ENCODE measurements at regions of chr6 and their contacts with region 1.

Region 1: GRCh38 chr6:44265007-44265721 is at the start of gene NFKBIE:
- DNase-seq: peak; percentile 97
- ATAC-seq: peak; percentile 52
- H3K4me3 Mint-ChIP-seq: peak within 1 kb of the TSS; percentile 88
- H3K27ac Mint-ChIP-seq: peak within 1 kb of the TSS; percentile 93
- H3K4me1 Mint-ChIP-seq: peaks cover 58% of the 10 kb centered on the region
- H3K27me3 Mint-ChIP-seq: peaks cover 14% of the 10 kb centered on the region
- total RNA-seq, gene NFKBIE: 17.2 to 19.9 TPM

Region 2: GRCh38 chr6:44172731-44173500 is 92.2 kb before region 1 on chr6:
- CTCF ChIA-PET with region 1: interaction called, 6 read pairs
- POLR2A ChIA-PET with region 1: no interaction called
- intact Hi-C with region 1: loop called (anchors 1 to 2 kb)
- DNase-seq: peak; percentile 91
- ATAC-seq: peak; percentile 72
- H3K4me3 Mint-ChIP-seq: peak overlapping the region; percentile 73
- H3K27ac Mint-ChIP-seq: peak overlapping the region; percentile 95
- H3K4me1 Mint-ChIP-seq: peaks cover 30% of the 10 kb centered on the region
- H3K27me3 Mint-ChIP-seq: no peaks in the 10 kb centered on the region

Region 3: DNA sequence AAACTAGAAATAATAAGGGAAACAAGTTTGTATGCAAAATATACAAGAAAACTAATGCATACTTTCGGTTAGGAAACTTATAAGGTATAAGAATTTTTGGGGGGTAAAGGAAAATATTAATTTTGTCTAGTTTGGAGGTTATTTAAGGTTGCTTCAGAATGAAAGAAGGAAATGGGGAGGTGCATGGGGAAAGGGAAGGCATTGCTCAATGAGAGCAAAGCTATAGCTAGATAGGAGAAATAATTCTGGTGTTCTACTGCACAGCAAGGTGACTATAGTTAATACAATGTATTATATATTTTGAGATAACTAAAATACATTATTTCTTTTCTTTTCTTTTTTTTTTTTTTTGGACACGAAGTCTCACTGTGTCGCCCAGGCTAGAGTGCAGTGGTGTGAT is 53.9 kb before region 1 on chr6:
- CTCF ChIA-PET with region 1: no interaction called
- POLR2A ChIA-PET with region 1: no interaction called
- intact Hi-C with region 1: no loop called
- DNase-seq: no peak
- ATAC-seq: no peak
- H3K4me3 Mint-ChIP-seq: no peak overlapping the region
- H3K27ac Mint-ChIP-seq: no peak overlapping the region
- H3K4me1 Mint-ChIP-seq: no peaks in the 10 kb centered on the region
- H3K27me3 Mint-ChIP-seq: no peaks in the 10 kb centered on the region

Region 4: DNA sequence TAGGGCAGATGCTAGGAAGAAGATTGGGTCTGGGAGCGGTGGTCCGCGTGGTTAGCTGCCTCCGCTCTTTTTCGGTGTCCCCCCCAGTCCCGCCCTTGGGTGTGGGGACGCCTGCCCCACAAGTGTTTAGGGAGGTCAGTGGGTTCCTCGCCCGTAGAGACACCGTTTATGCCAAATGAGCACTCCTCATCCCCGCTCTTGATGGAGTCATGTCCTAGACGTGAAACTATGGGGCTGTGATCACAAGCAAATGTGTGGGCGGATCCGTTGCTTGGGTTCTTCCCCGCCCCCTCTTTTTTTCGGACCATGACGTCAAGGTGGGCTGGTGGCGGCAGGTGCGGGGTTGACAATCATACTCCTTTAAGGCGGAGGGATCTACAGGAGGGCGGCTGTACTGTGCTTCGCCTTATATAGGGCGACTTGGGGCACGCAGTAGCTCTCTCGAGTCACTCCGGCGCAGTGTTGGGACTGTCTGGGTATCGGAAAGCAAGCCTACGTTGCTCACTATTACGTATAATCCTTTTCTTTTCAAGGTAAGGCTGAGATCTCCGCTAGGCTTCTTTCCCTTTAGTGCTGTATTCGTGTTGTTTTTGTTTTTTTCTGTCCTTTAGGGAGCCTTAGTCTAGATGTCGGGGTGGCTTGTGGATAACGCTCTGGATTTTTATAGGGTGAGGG is 18.4 kb before region 1 on chr6 and contains the start of gene HSP90AB1:
- CTCF ChIA-PET with region 1: interaction called, 6 read pairs
- POLR2A ChIA-PET with region 1: interaction called, 12 read pairs
- intact Hi-C with region 1: loop called (anchors 1 kb)
- DNase-seq: peak; percentile 98
- ATAC-seq: peak; percentile 86
- H3K4me3 Mint-ChIP-seq: peak within 1 kb of the TSS; percentile 97
- H3K27ac Mint-ChIP-seq: peak within 1 kb of the TSS; percentile 99
- H3K4me1 Mint-ChIP-seq: peaks cover 44% of the 10 kb centered on the region
- H3K27me3 Mint-ChIP-seq: no peaks in the 10 kb centered on the region
- total RNA-seq, gene HSP90AB1: 2,120 to 2,263 TPM

Region 5: GRCh38 chr6:44304282-44305199 is 39.4 kb after region 1 on chr6:
- CTCF ChIA-PET with region 1: interaction called, 55 read pairs
- POLR2A ChIA-PET with region 1: interaction called, 3 read pairs
- intact Hi-C with region 1: loop called (anchors 1 to 2 kb)
- DNase-seq: peak; percentile 60
- ATAC-seq: peak; percentile 71
- H3K4me3 Mint-ChIP-seq: no peak overlapping the region
- H3K27ac Mint-ChIP-seq: no peak overlapping the region
- H3K4me1 Mint-ChIP-seq: no peaks in the 10 kb centered on the region
- H3K27me3 Mint-ChIP-seq: no peaks in the 10 kb centered on the region

Region 6: DNA sequence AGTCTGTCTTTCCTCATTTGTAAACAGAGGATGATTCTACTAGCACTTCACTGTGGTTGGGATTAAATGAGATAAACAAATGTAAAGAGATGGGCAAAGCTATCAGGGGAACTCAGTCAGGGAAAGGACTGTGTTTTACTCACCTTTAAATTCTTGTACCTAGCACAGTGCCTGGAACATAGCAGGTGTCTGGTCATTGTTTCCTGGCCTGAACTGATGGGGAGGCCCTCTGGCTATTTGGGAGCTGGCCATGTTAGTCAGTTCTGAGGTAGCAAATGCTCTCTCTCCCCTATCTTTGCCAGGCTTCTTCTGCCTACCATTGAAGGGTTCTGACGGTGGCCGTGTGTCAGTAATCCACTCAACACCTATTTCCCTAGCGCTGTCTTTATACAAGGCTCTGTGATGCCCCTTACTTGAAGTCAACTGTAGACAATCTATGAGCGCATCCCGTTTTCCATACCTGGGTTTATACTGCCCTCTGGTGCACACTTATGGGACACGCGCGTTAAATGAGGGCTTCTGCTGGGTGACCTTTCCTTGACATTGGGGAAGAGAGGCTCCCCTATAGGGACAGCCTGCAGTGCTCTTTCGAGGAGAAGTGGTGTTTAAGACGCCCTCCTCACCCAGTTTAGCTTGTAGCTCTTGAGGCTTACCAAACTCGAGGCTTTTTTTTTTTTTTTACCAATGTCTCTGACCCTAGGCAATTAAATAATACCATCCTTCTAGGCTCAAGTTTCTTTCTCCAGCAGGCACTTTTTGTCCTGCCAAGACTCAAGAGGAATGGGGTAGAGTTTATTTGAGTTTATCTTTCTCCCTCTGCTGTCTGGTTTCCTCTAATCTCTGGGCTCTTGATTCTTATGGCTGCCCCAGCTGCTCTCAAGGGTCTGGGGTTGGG is 73.3 kb after region 1 on chr6:
- CTCF ChIA-PET with region 1: interaction called, 56 read pairs
- POLR2A ChIA-PET with region 1: interaction called, 3 read pairs
- intact Hi-C with region 1: loop called (anchors 1 kb)
- DNase-seq: peak; percentile 81
- ATAC-seq: peak; percentile 84
- H3K4me3 Mint-ChIP-seq: no peak overlapping the region
- H3K27ac Mint-ChIP-seq: no peak overlapping the region
- H3K4me1 Mint-ChIP-seq: peaks cover 5% of the 10 kb centered on the region
- H3K27me3 Mint-ChIP-seq: peaks cover 15% of the 10 kb centered on the region